ENCODE measurements at regions of chr18 and their contacts with region 1.

Region 1: DNA sequence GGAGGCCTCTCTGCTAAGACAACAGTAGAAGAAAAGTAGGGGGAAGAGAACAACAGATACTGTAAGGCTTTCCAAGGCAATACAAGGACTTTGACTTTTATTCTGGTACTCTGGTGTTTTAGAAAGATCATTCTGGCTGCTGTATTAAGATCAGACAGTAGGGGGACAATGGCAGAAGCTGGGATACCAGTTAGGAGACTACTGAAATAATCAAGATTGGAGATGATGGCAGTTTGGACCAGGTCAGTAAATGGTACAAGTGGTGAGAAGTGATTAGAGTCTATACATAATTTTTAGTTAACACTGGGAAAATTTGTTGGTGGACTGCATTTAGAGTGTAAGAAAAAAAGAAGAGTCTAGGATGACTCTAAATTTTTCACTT is 139.7 kb downstream of the ROCK1 start:
- DNase-seq: peak; percentile 16
- ATAC-seq: peak; percentile 73
- H3K4me3 ChIP-seq: no peak overlapping the region
- H3K27ac ChIP-seq: no peak overlapping the region
- H3K4me1 ChIP-seq: peaks cover 0 to 9% of the 10 kb centered on the region in 2 experiments; a peak in 2 of 4 replicates
- H3K27me3 ChIP-seq: no peaks in the 10 kb centered on the region
- CTCF ChIP-seq: peak in 2 of 3 experiments; percentile 60 to 66; a peak in 4 of 6 replicates
- POLR2A ChIP-seq: no peak
- RAD21 ChIP-seq: no peak

Region 2: GRCh38 chr18:20988726-20989125 is 16.8 kb after region 1 on chr18:
- CTCF ChIA-PET with region 1: no interaction called
- POLR2A ChIA-PET with region 1: no interaction called
- RAD21 ChIA-PET with region 1: no interaction called
- intact Hi-C with region 1: no loop called
- DNase-seq: no peak
- ATAC-seq: no peak
- H3K4me3 ChIP-seq: no peak overlapping the region
- H3K27ac ChIP-seq: no peak overlapping the region
- H3K4me1 ChIP-seq: no peaks in the 10 kb centered on the region
- H3K27me3 ChIP-seq: no peaks in the 10 kb centered on the region
- CTCF ChIP-seq: no peak
- POLR2A ChIP-seq: no peak
- RAD21 ChIP-seq: no peak

Region 3: DNA sequence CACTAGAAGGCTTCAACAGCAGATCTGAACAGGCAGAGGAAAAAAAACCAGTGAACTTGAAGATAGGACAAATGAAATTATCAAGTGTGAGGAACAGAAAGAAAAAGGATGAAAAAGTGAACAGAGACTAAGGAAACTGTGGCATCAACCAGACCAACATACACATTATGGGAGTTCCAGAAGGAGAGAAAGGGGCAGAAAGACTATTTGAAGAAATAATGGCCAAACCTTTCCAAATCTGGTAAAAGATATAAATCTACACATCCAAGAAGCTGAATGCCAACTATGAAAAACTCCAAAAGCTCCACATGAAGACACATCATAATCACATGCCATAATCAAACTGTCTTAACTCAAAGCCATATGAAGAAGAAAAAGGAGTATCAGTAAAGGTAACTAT is 60.0 kb after region 1 on chr18:
- CTCF ChIA-PET with region 1: no interaction called
- POLR2A ChIA-PET with region 1: no interaction called
- RAD21 ChIA-PET with region 1: no interaction called
- intact Hi-C with region 1: loop called (anchors 10 kb)
- DNase-seq: no peak
- ATAC-seq: no peak
- H3K4me3 ChIP-seq: no peak overlapping the region
- H3K27ac ChIP-seq: no peak overlapping the region
- H3K4me1 ChIP-seq: no peaks in the 10 kb centered on the region
- H3K27me3 ChIP-seq: no peaks in the 10 kb centered on the region
- CTCF ChIP-seq: no peak
- POLR2A ChIP-seq: no peak
- RAD21 ChIP-seq: no peak

Region 4: GRCh38 chr18:21111341-21112139 is 139.7 kb after region 1 on chr18 and contains the start of gene ROCK1:
- CTCF ChIA-PET with region 1: no interaction called
- POLR2A ChIA-PET with region 1: no interaction called
- RAD21 ChIA-PET with region 1: no interaction called
- intact Hi-C with region 1: loop called (anchors 5 kb)
- DNase-seq: peak; percentile 89
- ATAC-seq: peak; percentile 96
- H3K4me3 ChIP-seq: peak within 1 kb of the TSS; percentile 89 to 92
- H3K27ac ChIP-seq: peak within 1 kb of the TSS; percentile 86
- H3K4me1 ChIP-seq: peaks cover 15 to 17% of the 10 kb centered on the region in 2 experiments; a peak in 3 of 4 replicates
- H3K27me3 ChIP-seq: no peaks in the 10 kb centered on the region
- CTCF ChIP-seq: no peak
- POLR2A ChIP-seq: peak; percentile 45
- RAD21 ChIP-seq: no peak
- total RNA-seq, gene ROCK1: 38.1 TPM

Region 5: GRCh38 chr18:21179590-21180220 is 207.8 kb after region 1 on chr18:
- CTCF ChIA-PET with region 1: no interaction called
- POLR2A ChIA-PET with region 1: no interaction called
- RAD21 ChIA-PET with region 1: no interaction called
- intact Hi-C with region 1: loop called (anchors 5 kb)
- DNase-seq: peak; percentile 58
- ATAC-seq: peak; percentile 87
- H3K4me3 ChIP-seq: no peak overlapping the region
- H3K27ac ChIP-seq: no peak overlapping the region
- H3K4me1 ChIP-seq: peaks cover 7 to 12% of the 10 kb centered on the region in 2 experiments; a peak in 3 of 4 replicates
- H3K27me3 ChIP-seq: no peaks in the 10 kb centered on the region
- CTCF ChIP-seq: peak; percentile 50 to 83 (median 77); a peak in 5 of 6 replicates
- POLR2A ChIP-seq: no peak
- RAD21 ChIP-seq: peak; percentile 78

Measured in HCT116 (cell line).